Common myeloid progenitor, CD34-positive (primary cell): ENCODE measurements at regions of chr6 and their contacts with region 1.

Region 1: GRCh38 chr6:49531774-49532569 is 18.5 kb upstream of the C6orf141 start:
- DNase-seq: peak; percentile 77 to 89 (median 87)
- H3K4me3 ChIP-seq: peak overlapping the region in 2 of 7 experiments; percentile 48 to 61
- H3K27ac ChIP-seq: no peak overlapping the region
- H3K4me1 ChIP-seq: no peaks in the 10 kb centered on the region
- H3K27me3 ChIP-seq: no peaks in the 10 kb centered on the region

Region 2: DNA sequence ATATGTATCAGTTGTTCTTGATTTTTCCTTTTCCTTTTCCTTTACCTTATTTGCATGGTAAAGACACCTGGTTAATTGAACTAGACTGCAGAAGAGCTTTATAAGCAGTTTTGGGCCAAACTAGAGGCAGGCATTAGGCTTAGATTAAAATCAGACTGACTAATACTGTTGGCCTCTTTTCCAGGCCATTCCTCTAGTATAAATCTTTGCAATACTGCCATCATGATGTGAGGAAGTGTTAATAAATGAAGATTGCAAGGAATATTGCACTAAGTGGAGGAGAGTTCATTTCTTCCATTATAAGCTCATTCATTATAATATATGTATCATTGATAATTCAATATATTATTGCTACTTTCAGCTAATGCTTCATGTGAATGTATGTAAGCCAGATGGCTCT is 232.7 kb before region 1 on chr6:
- CTCF ChIA-PET with region 1: no interaction called
- POLR2A ChIA-PET with region 1: no interaction called
- DNase-seq: no peak
- H3K4me3 ChIP-seq: no peak overlapping the region
- H3K27ac ChIP-seq: no peak overlapping the region
- H3K4me1 ChIP-seq: no peaks in the 10 kb centered on the region
- H3K27me3 ChIP-seq: no peaks in the 10 kb centered on the region

Region 3: DNA sequence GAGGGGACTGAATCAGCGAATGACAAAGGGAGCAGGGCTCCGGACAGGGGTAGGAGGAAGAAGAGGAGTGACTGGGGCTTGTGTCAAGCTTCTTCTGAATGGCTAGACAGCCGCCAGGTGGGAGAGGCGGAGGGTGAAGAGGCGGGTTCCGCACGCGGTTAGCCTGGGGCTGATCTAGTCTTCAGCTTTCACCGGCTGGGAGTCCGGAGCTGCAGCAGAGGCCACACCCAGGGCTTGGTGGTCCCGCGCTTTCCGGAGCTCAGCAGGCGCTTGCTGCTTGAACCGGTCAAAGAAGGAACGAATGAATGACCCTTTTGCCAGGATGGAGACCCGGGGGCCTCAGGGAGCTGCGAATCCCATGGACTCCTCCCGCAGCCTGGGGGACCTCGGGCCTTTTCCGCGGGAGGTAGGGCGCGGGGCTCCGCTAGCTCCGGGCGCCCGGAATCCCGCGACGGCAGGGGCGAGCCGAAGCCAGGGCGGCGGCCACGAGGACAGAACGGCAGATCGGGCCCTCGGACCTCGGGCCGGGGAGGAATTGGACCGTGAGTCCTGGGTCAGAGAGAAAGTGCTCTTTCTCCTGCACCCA is 18.6 kb after region 1 on chr6 and contains the start of gene C6orf141:
- CTCF ChIA-PET with region 1: interaction called, 13 read pairs
- POLR2A ChIA-PET with region 1: no interaction called
- DNase-seq: peak in 2 of 3 donors; percentile 43 to 60
- H3K4me3 ChIP-seq: peak within 1 kb of the TSS; percentile 35 to 87 (median 72)
- H3K27ac ChIP-seq: no peak within 1 kb of the TSS
- H3K4me1 ChIP-seq: peaks cover 5 to 25% (median 22%) of the 10 kb centered on the region in 4 experiments
- H3K27me3 ChIP-seq: peaks cover 0 to 13% (median 6%) of the 10 kb centered on the region in 5 experiments

Region 4: GRCh38 chr6:49606696-49607390 is 74.9 kb after region 1 on chr6:
- CTCF ChIA-PET with region 1: interaction called, 30 read pairs
- POLR2A ChIA-PET with region 1: no interaction called
- DNase-seq: peak; percentile 85 to 95 (median 92)
- H3K4me3 ChIP-seq: no peak overlapping the region
- H3K27ac ChIP-seq: no peak overlapping the region
- H3K4me1 ChIP-seq: no peaks in the 10 kb centered on the region
- H3K27me3 ChIP-seq: peaks cover 0 to 3% (median 0%) of the 10 kb centered on the region in 5 experiments

Region 5: DNA sequence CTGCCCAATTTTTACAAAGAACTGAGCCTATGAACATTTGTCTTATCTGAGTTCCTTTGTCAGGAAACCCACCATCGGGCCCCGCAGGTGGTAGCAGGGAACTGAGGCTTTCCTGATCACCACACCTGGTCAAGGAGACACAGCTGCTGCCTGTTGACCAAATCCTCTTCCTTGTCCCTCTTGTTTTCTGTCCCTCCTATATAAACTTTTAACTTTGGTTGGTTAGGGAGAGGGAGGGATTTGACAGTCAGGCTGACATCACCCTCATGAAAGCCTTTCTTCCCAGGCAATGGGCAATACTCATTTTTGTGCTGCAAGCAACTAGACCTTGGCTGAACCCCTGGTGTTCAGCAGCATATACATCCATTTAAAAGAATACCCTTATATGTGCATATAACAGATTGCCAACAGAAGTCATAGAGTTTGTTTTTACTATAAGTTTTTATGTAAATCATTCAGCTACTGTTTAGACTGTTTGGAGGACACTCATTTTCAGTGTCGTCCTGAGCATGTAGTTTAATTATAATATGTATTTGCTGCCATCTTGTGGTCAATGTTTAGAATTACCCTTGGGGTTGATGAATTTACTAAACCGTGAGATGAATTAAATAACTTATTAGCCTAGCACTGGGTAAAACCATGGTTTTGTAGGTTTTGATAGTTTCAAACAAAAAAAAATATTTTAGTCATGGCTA is 317.4 kb after region 1 on chr6:
- CTCF ChIA-PET with region 1: interaction called, 26 read pairs
- POLR2A ChIA-PET with region 1: no interaction called
- DNase-seq: peak; percentile 61 to 84 (median 83)
- H3K4me3 ChIP-seq: no peak overlapping the region
- H3K27ac ChIP-seq: no peak overlapping the region
- H3K4me1 ChIP-seq: no peaks in the 10 kb centered on the region
- H3K27me3 ChIP-seq: no peaks in the 10 kb centered on the region